ENCODE measurements at regions of chr11 and their contacts with region 1.

Region 1: GRCh38 chr11:44133335-44133946 is 38.0 kb downstream of the EXT2 start:
- DNase-seq: peak; percentile 64
- H3K4me3 ChIP-seq: no peak overlapping the region
- H3K27ac ChIP-seq: no peak overlapping the region
- H3K4me1 ChIP-seq: no peaks in the 10 kb centered on the region
- H3K27me3 ChIP-seq: no peaks in the 10 kb centered on the region
- CTCF ChIP-seq: peak; percentile 60 to 71
- POLR2A ChIP-seq: no peak

Region 2: GRCh38 chr11:44104481-44105294 is 28.8 kb before region 1 on chr11:
- CTCF ChIA-PET with region 1: interaction called, 10 read pairs
- POLR2A ChIA-PET with region 1: no interaction called
- dilution Hi-C with region 1: no loop called
- intact Hi-C with region 1: no loop called
- DNase-seq: no peak
- H3K4me3 ChIP-seq: no peak overlapping the region
- H3K27ac ChIP-seq: no peak overlapping the region
- H3K4me1 ChIP-seq: no peaks in the 10 kb centered on the region
- H3K27me3 ChIP-seq: no peaks in the 10 kb centered on the region
- CTCF ChIP-seq: no peak
- POLR2A ChIP-seq: no peak

Region 3: GRCh38 chr11:44143943-44144909 is 10.8 kb after region 1 on chr11:
- CTCF ChIA-PET with region 1: interaction called, 13 read pairs
- POLR2A ChIA-PET with region 1: no interaction called
- dilution Hi-C with region 1: no loop called
- intact Hi-C with region 1: no loop called
- DNase-seq: peak; percentile 26
- H3K4me3 ChIP-seq: no peak overlapping the region
- H3K27ac ChIP-seq: no peak overlapping the region
- H3K4me1 ChIP-seq: peaks cover 4% of the 10 kb centered on the region
- H3K27me3 ChIP-seq: no peaks in the 10 kb centered on the region
- CTCF ChIP-seq: no peak
- POLR2A ChIP-seq: no peak

Region 4: GRCh38 chr11:44190868-44191200 is 57.4 kb after region 1 on chr11:
- CTCF ChIA-PET with region 1: no interaction called
- POLR2A ChIA-PET with region 1: no interaction called
- dilution Hi-C with region 1: no loop called
- intact Hi-C with region 1: no loop called
- DNase-seq: no peak
- H3K4me3 ChIP-seq: no peak overlapping the region
- H3K27ac ChIP-seq: no peak overlapping the region
- H3K4me1 ChIP-seq: no peaks in the 10 kb centered on the region
- H3K27me3 ChIP-seq: no peaks in the 10 kb centered on the region
- CTCF ChIP-seq: no peak
- POLR2A ChIP-seq: no peak

Region 5: GRCh38 chr11:44326615-44327475 is 193.4 kb after region 1 on chr11:
- CTCF ChIA-PET with region 1: interaction called, 20 read pairs
- POLR2A ChIA-PET with region 1: no interaction called
- dilution Hi-C with region 1: no loop called
- intact Hi-C with region 1: no loop called
- DNase-seq: no peak
- H3K4me3 ChIP-seq: no peak overlapping the region
- H3K27ac ChIP-seq: no peak overlapping the region
- H3K4me1 ChIP-seq: no peaks in the 10 kb centered on the region
- H3K27me3 ChIP-seq: peaks cover 55 to 70% of the 10 kb centered on the region in 2 experiments
- CTCF ChIP-seq: no peak
- POLR2A ChIP-seq: no peak

Region 6: GRCh38 chr11:44483919-44484610 is 350.6 kb after region 1 on chr11:
- CTCF ChIA-PET with region 1: interaction called, 23 read pairs
- POLR2A ChIA-PET with region 1: no interaction called
- dilution Hi-C with region 1: no loop called
- intact Hi-C with region 1: loop called (anchors 1 kb)
- DNase-seq: peak; percentile 12
- H3K4me3 ChIP-seq: no peak overlapping the region
- H3K27ac ChIP-seq: no peak overlapping the region
- H3K4me1 ChIP-seq: no peaks in the 10 kb centered on the region
- H3K27me3 ChIP-seq: peaks cover 0 to 1% of the 10 kb centered on the region in 2 experiments
- CTCF ChIP-seq: peak; percentile 29 to 51
- POLR2A ChIP-seq: no peak

Region 7: GRCh38 chr11:44538375-44539054 is 405.1 kb after region 1 on chr11:
- CTCF ChIA-PET with region 1: interaction called, 20 read pairs
- POLR2A ChIA-PET with region 1: no interaction called
- dilution Hi-C with region 1: no loop called
- intact Hi-C with region 1: loop called (anchors 1 kb)
- DNase-seq: peak; percentile 72
- H3K4me3 ChIP-seq: no peak overlapping the region
- H3K27ac ChIP-seq: no peak overlapping the region
- H3K4me1 ChIP-seq: no peaks in the 10 kb centered on the region
- H3K27me3 ChIP-seq: peaks cover 4 to 5% of the 10 kb centered on the region in 2 experiments
- CTCF ChIP-seq: peak; percentile 91 to 95
- POLR2A ChIP-seq: no peak